Activated CD4-positive, alpha-beta T cell treated with anti-CD3 and anti-CD28 coated beads for 36 hours (primary cell): ENCODE measurements at regions of chr14 and their contacts with region 1.

Region 1: GRCh38 chr14:78302841-78303240 is 132.7 kb downstream of the NRXN3 start:
- DNase-seq: no peak
- ATAC-seq: no peak
- H3K4me3 Mint-ChIP-seq: no peak overlapping the region
- H3K27ac Mint-ChIP-seq: no peak overlapping the region
- H3K4me1 Mint-ChIP-seq: no peaks in the 10 kb centered on the region
- H3K27me3 Mint-ChIP-seq: peaks cover 14% of the 10 kb centered on the region

Region 2: GRCh38 chr14:78227248-78228077 is 75.4 kb before region 1 on chr14:
- CTCF ChIA-PET with region 1: no interaction called
- POLR2A ChIA-PET with region 1: no interaction called
- intact Hi-C with region 1: no loop called
- DNase-seq: no peak
- ATAC-seq: no peak
- H3K4me3 Mint-ChIP-seq: no peak overlapping the region
- H3K27ac Mint-ChIP-seq: no peak overlapping the region
- H3K4me1 Mint-ChIP-seq: peaks cover 11% of the 10 kb centered on the region
- H3K27me3 Mint-ChIP-seq: peaks cover 15% of the 10 kb centered on the region

Region 3: GRCh38 chr14:78292003-78292402 is 10.8 kb before region 1 on chr14:
- CTCF ChIA-PET with region 1: no interaction called
- POLR2A ChIA-PET with region 1: interaction called, 11 read pairs
- intact Hi-C with region 1: no loop called
- DNase-seq: no peak
- ATAC-seq: no peak
- H3K4me3 Mint-ChIP-seq: no peak overlapping the region
- H3K27ac Mint-ChIP-seq: no peak overlapping the region
- H3K4me1 Mint-ChIP-seq: no peaks in the 10 kb centered on the region
- H3K27me3 Mint-ChIP-seq: peaks cover 6% of the 10 kb centered on the region

Region 4: DNA sequence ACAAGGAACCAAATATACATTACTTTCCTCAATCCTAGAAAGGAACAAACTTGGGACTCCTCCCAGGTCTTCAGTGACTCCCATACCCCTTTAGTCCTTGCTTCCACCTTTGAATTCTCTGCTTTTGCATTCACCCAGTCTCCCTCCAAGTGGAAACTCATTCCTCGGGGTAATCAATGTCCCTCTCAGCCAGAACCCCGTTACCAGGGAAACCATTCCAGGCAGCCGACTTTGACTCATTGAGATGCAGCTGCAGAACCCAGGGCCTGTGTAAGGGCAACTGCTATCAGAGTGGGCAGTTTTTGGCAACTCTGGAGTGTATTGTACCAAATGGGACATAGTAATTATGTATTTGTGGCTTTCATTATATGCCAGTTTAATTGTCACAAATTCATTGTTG is 53.5 kb after region 1 on chr14:
- CTCF ChIA-PET with region 1: no interaction called
- POLR2A ChIA-PET with region 1: no interaction called
- intact Hi-C with region 1: no loop called
- DNase-seq: no peak
- ATAC-seq: no peak
- H3K4me3 Mint-ChIP-seq: no peak overlapping the region
- H3K27ac Mint-ChIP-seq: no peak overlapping the region
- H3K4me1 Mint-ChIP-seq: no peaks in the 10 kb centered on the region
- H3K27me3 Mint-ChIP-seq: peaks cover 6% of the 10 kb centered on the region